Endothelial cell of umbilical vein (primary cell): ENCODE measurements at regions of chr17 and their contacts with region 1.

Region 1: GRCh38 chr17:6507535-6507934 is 48.8 kb downstream of the PITPNM3 start:
- DNase-seq: peak; percentile 92
- H3K4me3 ChIP-seq: no peak overlapping the region
- H3K27ac ChIP-seq: no peak overlapping the region
- H3K4me1 ChIP-seq: peaks cover 53% of the 10 kb centered on the region
- H3K27me3 ChIP-seq: no peaks in the 10 kb centered on the region
- CTCF ChIP-seq: no peak
- POLR2A ChIP-seq: no peak

Region 2: DNA sequence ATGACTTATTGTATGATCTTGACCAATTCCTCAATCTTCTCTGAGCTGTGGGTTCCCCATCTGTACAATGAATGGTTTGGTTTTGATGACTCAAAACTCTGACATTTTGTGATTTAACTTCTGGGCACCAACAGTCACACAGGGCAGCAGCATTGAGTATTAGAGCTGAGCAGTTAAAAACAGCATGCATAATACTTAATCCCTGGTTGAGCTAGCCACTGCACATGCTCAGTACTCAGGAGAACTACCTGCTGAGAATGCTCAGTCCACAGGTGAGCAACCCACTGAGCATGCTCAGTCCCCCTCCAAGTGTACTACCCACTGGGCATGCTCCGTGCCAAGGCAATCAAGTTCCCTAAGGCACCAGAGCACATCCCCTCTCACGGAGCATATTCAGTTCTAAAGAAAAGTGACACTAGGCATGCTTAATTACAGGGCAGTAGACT is 141.3 kb before region 1 on chr17:
- CTCF ChIA-PET with region 1: no interaction called
- POLR2A ChIA-PET with region 1: no interaction called
- dilution Hi-C with region 1: no loop called
- intact Hi-C with region 1: no loop called
- DNase-seq: no peak
- H3K4me3 ChIP-seq: no peak overlapping the region
- H3K27ac ChIP-seq: no peak overlapping the region
- H3K4me1 ChIP-seq: no peaks in the 10 kb centered on the region
- H3K27me3 ChIP-seq: peaks cover 3 to 10% of the 10 kb centered on the region in 2 experiments
- CTCF ChIP-seq: no peak
- POLR2A ChIP-seq: no peak

Region 3: DNA sequence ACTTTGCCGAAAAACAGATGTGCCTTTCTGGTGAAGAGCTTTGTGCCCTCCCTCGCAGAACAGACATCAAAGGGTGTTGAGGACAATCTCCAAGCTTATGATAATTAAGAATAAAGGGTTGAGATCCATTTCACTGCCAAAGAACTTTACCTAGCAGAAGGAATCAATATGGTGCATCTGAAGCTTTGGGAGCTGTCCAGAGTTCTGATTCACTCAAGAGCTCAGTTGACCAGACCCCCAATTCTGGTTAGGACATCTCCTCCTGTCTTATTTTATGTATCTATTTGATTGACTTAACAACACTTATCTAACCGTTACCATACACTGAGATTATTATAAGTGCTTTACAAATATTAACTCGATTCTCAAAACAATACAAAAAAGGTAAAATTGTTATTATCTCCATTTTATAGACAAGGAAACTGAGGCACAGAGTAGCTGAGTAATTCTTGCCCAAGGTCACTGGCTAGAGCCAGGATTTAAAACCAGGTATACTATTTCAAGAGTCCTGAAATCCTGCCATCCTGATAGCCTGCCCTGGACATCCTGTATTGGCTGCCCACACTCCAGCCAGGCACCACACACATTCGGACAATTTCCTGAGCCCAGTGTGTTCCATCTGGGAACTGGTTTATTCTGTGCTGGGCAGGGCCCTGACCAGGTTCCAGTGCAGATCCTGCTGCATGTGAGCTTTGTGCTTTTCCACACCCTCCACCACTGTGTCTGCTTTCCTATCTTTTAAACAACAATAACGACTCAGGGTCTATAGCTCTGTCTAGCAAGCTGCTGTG is 19.0 kb after region 1 on chr17:
- CTCF ChIA-PET with region 1: no interaction called
- POLR2A ChIA-PET with region 1: no interaction called
- dilution Hi-C with region 1: no loop called
- intact Hi-C with region 1: no loop called
- DNase-seq: no peak
- H3K4me3 ChIP-seq: no peak overlapping the region
- H3K27ac ChIP-seq: no peak overlapping the region
- H3K4me1 ChIP-seq: peaks cover 3% of the 10 kb centered on the region
- H3K27me3 ChIP-seq: no peaks in the 10 kb centered on the region
- CTCF ChIP-seq: no peak
- POLR2A ChIP-seq: no peak

Region 4: GRCh38 chr17:6574687-6575595 is 67.4 kb after region 1 on chr17:
- CTCF ChIA-PET with region 1: no interaction called
- POLR2A ChIA-PET with region 1: no interaction called
- dilution Hi-C with region 1: no loop called
- intact Hi-C with region 1: loop called (anchors 5 kb)
- DNase-seq: peak; percentile 69
- H3K4me3 ChIP-seq: no peak overlapping the region
- H3K27ac ChIP-seq: peak overlapping the region; percentile 19
- H3K4me1 ChIP-seq: peaks cover 14% of the 10 kb centered on the region
- H3K27me3 ChIP-seq: no peaks in the 10 kb centered on the region
- CTCF ChIP-seq: no peak
- POLR2A ChIP-seq: no peak

Region 5: DNA sequence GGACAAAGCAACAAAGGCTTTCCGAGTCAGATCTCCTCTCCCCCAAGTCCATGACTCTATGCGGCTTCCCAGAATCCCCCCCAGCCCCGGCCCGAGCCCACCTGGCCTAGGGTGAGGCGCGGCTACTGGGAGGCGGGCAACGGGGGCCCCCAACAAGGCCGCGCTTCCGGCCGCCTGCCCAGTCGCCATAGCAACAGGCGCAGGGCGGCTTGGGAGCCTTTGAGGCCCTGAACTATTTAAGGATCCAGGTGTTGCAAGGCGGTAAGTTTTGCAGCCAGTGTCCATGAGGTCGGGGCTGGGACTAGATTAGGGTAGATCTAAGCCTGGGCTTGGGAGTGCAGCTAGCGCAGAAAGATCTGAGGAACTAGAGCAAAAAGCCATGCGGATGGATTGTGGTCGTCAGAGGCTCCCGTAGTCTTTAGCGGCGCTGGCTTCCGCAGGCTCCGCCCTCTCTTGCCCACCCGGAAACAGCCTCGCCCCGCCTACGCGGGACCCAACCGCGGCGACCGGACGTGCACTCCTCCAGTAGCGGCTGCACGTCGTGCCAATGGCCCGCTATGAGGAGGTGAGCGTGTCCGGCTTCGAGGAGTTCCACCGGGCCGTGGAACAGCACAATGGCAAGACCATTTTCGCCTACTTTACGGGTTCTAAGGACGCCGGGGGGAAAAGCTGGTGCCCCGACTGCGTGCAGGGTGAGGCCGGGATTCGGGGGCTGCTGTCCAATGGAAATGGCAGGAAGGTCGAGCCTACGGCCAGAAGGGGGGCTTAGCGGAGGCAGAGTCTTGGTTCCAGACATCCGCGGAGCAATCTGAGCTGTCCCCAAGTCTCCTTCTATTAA is 133.2 kb after region 1 on chr17 and contains the starts of genes KIAA0753 and TXNDC17:
- CTCF ChIA-PET with region 1: no interaction called
- POLR2A ChIA-PET with region 1: no interaction called
- dilution Hi-C with region 1: no loop called
- intact Hi-C with region 1: loop called (anchors 1 kb)
- DNase-seq: peak; percentile 96
- H3K4me3 ChIP-seq: peak within 1 kb of the TSS; percentile 44 to 86 (median 70)
- H3K27ac ChIP-seq: peak within 1 kb of the TSS; percentile 83
- H3K4me1 ChIP-seq: peaks cover 15% of the 10 kb centered on the region
- H3K27me3 ChIP-seq: no peaks in the 10 kb centered on the region
- CTCF ChIP-seq: no peak
- POLR2A ChIP-seq: peak; percentile 98
- total RNA-seq, gene KIAA0753: 20.1 and 23.9 TPM in 2 replicates
- total RNA-seq, gene TXNDC17: 101 and 103 TPM in 2 replicates

Region 6: GRCh38 chr17:7252176-7253043 is 744.9 kb after region 1 on chr17 and contains the start of gene ELP5:
- CTCF ChIA-PET with region 1: no interaction called
- POLR2A ChIA-PET with region 1: no interaction called
- dilution Hi-C with region 1: no loop called
- intact Hi-C with region 1: no loop called
- DNase-seq: peak; percentile 99
- H3K4me3 ChIP-seq: peak within 1 kb of the TSS; percentile 57 to 87 (median 83)
- H3K27ac ChIP-seq: peak within 1 kb of the TSS; percentile 95
- H3K4me1 ChIP-seq: peaks cover 23% of the 10 kb centered on the region
- H3K27me3 ChIP-seq: no peaks in the 10 kb centered on the region
- CTCF ChIP-seq: peak in 1 of 2 donors; percentile 10
- POLR2A ChIP-seq: peak; percentile 49
- total RNA-seq, gene ELP5: 41.6 and 44.4 TPM in 2 replicates